ENCODE measurements at regions of chr5 and their contacts with region 1.

Region 1: DNA sequence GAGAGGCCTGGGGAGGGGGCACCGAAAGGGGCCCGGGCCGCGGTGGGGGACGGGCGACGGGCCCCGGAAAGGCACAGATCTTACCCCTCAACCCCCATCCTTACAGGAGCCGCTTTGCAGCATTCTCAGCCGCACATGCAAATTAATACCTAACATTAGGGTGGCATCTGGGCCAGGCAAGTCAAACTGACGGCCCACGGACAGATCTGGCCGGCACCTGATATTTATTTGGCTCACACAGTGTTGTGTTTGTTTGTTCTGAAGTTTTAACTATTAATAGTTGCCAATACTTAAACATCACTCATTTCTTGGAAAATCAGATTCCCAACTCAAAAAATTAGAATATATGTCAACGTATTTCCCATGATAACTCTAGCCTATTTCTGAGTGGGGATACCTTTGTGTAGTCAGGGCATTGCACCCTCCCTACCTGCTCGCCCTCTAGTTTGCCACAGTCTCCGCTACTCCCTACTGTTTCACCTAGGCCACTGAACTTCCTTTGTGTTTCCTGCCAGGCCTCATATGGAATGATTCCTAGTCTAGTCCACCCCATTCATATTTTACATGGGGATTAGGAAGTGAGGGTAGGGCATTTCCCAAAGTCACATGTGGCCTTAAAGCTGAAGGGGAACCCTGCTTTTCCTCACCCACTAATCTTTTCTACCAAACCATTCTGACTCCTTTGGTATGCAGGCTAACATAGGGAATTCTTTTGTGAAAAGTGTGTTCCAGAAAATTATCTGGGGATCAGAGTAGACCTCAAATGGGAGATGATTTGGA is 71.9 kb upstream of the LARP1 start:
- DNase-seq: no peak
- H3K4me3 ChIP-seq: peak overlapping the region in 2 of 3 donors; percentile 13 to 25
- H3K27ac ChIP-seq: peak overlapping the region; percentile 82 to 87 (median 85)
- H3K4me1 ChIP-seq: peaks cover 4 to 17% of the 10 kb centered on the region in 2 donors
- H3K27me3 ChIP-seq: no peaks in the 10 kb centered on the region
- CTCF ChIP-seq: no peak
- POLR2A ChIP-seq: no peak

Region 2: GRCh38 chr5:154761046-154761736 is 77.9 kb after region 1 on chr5:
- intact Hi-C with region 1: loop called (anchors 5 kb)
- DNase-seq: no peak
- H3K4me3 ChIP-seq: no peak overlapping the region
- H3K27ac ChIP-seq: peak overlapping the region in 1 of 3 donors; percentile 13
- H3K4me1 ChIP-seq: peaks cover 53 to 62% of the 10 kb centered on the region in 2 donors
- H3K27me3 ChIP-seq: no peaks in the 10 kb centered on the region
- CTCF ChIP-seq: no peak
- POLR2A ChIP-seq: no peak